B cell (primary cell): ENCODE measurements at regions of chr17 and their contacts with region 1.

Region 1: DNA sequence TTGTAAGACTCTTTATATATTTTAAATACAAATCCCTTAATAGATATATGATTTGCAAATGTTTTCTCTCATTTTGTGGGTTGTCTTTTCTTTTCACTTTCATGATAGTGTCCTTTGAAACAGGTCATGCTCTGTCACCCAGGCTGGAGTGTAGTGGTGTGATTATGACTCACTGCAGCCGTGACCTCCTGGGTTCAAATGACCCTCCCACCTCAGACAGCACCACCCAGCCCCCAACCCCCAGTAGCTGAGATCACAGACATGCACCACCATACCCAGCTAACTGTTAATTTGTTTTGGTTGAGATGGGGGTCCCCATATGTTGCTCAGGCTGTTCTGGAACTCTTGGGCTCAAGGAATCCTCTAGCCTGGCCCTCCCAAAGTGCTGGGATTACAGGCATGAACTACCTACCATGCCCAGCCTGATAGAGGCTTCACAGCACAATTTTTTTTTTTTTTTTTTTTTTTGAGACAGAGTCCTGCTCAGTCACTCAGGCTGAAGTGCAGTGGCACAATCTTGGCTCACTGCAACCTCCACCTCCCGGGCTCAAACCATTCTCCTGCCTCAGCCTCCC is 18.5 kb upstream of the TMIGD1 start:
- DNase-seq: no peak
- ATAC-seq: no peak
- H3K4me3 ChIP-seq: no peak overlapping the region
- H3K4me3 Mint-ChIP-seq: no peak overlapping the region
- H3K27ac ChIP-seq: no peak overlapping the region
- H3K27ac Mint-ChIP-seq: no peak overlapping the region
- H3K4me1 ChIP-seq: no peaks in the 10 kb centered on the region
- H3K4me1 Mint-ChIP-seq: no peaks in the 10 kb centered on the region
- H3K27me3 ChIP-seq: peaks cover 0 to 3% (median 0%) of the 10 kb centered on the region in 4 experiments
- H3K27me3 Mint-ChIP-seq: peaks cover 13% of the 10 kb centered on the region
- CTCF ChIP-seq: no peak

Region 2: GRCh38 chr17:30405161-30405560 is 52.8 kb after region 1 on chr17:
- CTCF ChIA-PET with region 1: no interaction called
- POLR2A ChIA-PET with region 1: no interaction called
- intact Hi-C with region 1: loop called (anchors 10 kb)
- DNase-seq: no peak
- ATAC-seq: no peak
- H3K4me3 ChIP-seq: no peak overlapping the region
- H3K4me3 Mint-ChIP-seq: no peak overlapping the region
- H3K27ac ChIP-seq: no peak overlapping the region
- H3K27ac Mint-ChIP-seq: no peak overlapping the region
- H3K4me1 ChIP-seq: no peaks in the 10 kb centered on the region
- H3K4me1 Mint-ChIP-seq: no peaks in the 10 kb centered on the region
- H3K27me3 ChIP-seq: no peaks in the 10 kb centered on the region
- H3K27me3 Mint-ChIP-seq: no peaks in the 10 kb centered on the region
- CTCF ChIP-seq: no peak